Naive thymus-derived CD4-positive, alpha-beta T cell (primary cell): ENCODE measurements at regions of chr10 and their contacts with region 1.

Region 1: DNA sequence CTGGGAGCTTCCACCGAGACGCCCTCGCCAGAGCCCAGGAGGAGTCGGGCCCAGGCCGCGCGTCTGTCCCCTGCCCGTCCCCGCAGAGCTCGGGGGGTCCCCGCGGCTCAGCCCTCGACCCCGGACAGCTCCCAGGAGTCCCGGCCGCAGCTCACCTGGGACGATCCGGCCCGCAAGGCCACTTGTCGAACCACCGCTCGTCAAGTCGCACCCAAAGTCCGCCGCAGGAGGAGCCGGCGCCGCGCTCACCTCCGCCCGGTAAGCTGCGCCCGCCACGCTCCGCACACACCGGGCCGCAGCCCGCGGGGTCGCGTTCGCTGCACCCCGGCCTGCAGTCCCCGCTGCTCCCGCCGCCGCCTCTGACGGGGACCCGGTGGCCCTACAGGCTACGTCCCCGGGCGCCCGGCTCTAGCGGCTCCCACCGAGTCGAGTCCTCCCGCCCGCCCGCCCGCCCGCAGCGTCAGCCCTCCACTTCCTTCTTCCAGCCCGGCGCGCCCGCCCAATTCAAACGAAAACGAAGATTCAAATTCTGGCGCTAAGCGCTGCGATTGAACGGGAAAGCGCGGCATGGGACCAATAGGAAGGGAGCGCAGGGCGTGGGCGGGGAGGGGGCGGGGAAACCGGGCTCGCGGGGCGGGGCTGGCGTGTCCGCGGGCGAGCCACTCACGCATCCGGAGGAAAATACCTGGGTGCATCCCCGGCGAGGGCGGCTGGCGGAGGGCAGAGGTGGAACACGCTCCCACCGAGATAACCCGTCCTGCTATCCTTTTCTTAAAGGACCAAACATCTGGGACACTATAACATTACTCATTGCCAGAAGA is at the start of gene MKI67:
- DNase-seq: peak; percentile 68 to 88 (median 85)
- ATAC-seq: peak; percentile 98
- H3K4me3 ChIP-seq: peak within 1 kb of the TSS; percentile 82
- H3K4me3 Mint-ChIP-seq: peak within 1 kb of the TSS; percentile 86 to 94 (median 88)
- H3K27ac ChIP-seq: peak within 1 kb of the TSS; percentile 73
- H3K27ac Mint-ChIP-seq: peak within 1 kb of the TSS in 8 of 9 donors; percentile 56 to 97 (median 71)
- H3K4me1 ChIP-seq: peaks cover 9 to 18% of the 10 kb centered on the region in 2 donors
- H3K4me1 Mint-ChIP-seq: peaks cover 6 to 44% (median 19%) of the 10 kb centered on the region in 7 donors
- H3K27me3 ChIP-seq: peaks cover 10 to 11% of the 10 kb centered on the region in 2 donors
- H3K27me3 Mint-ChIP-seq: peaks cover 7 to 37% (median 33%) of the 10 kb centered on the region in 5 donors
- total RNA-seq, gene MKI67: 0.05 to 219 (median 1.6) TPM

Region 2: DNA sequence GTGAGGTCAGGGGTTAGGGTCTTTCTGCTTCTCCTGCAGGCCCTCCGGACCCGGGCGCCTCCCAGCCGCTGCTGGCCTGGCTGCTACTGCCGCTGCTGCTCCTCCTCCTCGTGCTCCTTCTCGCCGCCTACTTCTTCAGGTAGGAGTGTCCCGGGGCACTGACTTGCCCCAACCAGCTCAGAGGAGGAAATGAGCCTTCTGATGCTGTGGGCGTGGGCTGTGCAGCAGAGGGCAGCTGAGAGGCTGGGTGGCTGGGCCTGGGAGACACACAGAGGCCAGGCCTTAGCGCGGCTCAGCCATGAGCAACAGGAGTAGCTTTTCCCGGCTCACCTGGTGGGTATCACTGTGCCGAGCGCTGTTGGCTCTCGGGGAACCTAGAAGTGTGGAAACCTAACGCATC is 78.8 kb before region 1 on chr10:
- CTCF ChIA-PET with region 1: no interaction called
- POLR2A ChIA-PET with region 1: no interaction called
- intact Hi-C with region 1: loop called (anchors 1 kb)
- DNase-seq: peak; percentile 57 to 84 (median 80)
- ATAC-seq: peak; percentile 96
- H3K4me3 ChIP-seq: peak overlapping the region; percentile 60
- H3K4me3 Mint-ChIP-seq: peak overlapping the region; percentile 88 to 98 (median 96)
- H3K27ac ChIP-seq: peak overlapping the region; percentile 82
- H3K27ac Mint-ChIP-seq: peak overlapping the region; percentile 77 to 98 (median 95)
- H3K4me1 ChIP-seq: peaks cover 28 to 37% of the 10 kb centered on the region in 2 donors
- H3K4me1 Mint-ChIP-seq: peaks cover 13 to 72% (median 52%) of the 10 kb centered on the region in 7 donors
- H3K27me3 ChIP-seq: no peaks in the 10 kb centered on the region
- H3K27me3 Mint-ChIP-seq: no peaks in the 10 kb centered on the region

Region 3: GRCh38 chr10:128087884-128088709 is 38.1 kb before region 1 on chr10:
- CTCF ChIA-PET with region 1: interaction called, 3 read pairs
- POLR2A ChIA-PET with region 1: no interaction called
- intact Hi-C with region 1: loop called in 1 of 2 experiments (anchors 5 kb)
- DNase-seq: no peak
- ATAC-seq: no peak
- H3K4me3 ChIP-seq: no peak overlapping the region
- H3K4me3 Mint-ChIP-seq: no peak overlapping the region
- H3K27ac ChIP-seq: no peak overlapping the region
- H3K27ac Mint-ChIP-seq: no peak overlapping the region
- H3K4me1 ChIP-seq: no peaks in the 10 kb centered on the region
- H3K4me1 Mint-ChIP-seq: peaks cover 0 to 10% (median 0%) of the 10 kb centered on the region in 7 donors
- H3K27me3 ChIP-seq: no peaks in the 10 kb centered on the region
- H3K27me3 Mint-ChIP-seq: no peaks in the 10 kb centered on the region

Region 4: DNA sequence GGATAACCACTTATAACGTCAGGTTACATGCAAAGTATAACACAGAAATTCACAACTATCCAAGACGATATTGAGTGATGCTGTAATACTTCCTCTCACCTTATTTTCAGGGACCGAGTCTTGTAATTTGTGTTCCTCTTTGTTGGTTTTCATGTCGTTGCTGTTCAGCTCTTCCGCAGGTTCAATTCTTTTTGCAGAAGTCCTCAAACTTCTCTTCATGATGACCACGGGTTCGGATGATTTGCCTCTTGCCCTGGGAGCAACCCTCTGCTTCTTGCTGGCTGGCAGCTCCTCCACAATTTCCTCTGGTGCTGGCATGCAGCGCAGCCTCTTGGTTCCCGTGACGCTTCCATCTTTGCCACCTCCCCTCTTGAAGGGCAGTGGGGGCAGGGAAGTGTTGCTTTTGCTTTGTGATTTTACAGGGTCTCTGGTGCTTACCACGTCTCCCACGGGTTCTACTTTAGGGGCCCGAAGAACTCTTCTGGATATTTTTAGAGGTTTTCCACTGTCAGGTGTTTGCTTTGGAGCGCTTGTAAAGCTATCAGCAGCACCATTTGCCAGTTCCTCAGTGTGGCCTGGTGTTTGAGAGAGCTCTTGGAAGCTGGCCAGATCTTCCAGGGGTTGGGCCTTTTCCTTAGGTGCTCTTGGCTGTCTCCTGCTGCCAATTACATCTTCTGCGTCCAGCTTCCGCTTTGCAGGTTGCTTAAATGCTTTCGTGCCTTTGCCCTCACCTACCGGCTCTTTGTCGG is 23.5 kb before region 1 on chr10:
- CTCF ChIA-PET with region 1: no interaction called
- POLR2A ChIA-PET with region 1: no interaction called
- intact Hi-C with region 1: loop called (anchors 1 to 2 kb)
- DNase-seq: no peak
- ATAC-seq: no peak
- H3K4me3 ChIP-seq: peak overlapping the region; percentile 16
- H3K4me3 Mint-ChIP-seq: peak overlapping the region in 8 of 10 donors; percentile 16 to 68 (median 40)
- H3K27ac ChIP-seq: no peak overlapping the region
- H3K27ac Mint-ChIP-seq: peak overlapping the region in 8 of 9 donors; percentile 13 to 84 (median 69)
- H3K4me1 ChIP-seq: peaks cover 29 to 32% of the 10 kb centered on the region in 2 donors
- H3K4me1 Mint-ChIP-seq: peaks cover 7 to 41% (median 20%) of the 10 kb centered on the region in 7 donors
- H3K27me3 ChIP-seq: no peaks in the 10 kb centered on the region
- H3K27me3 Mint-ChIP-seq: no peaks in the 10 kb centered on the region

Region 5: DNA sequence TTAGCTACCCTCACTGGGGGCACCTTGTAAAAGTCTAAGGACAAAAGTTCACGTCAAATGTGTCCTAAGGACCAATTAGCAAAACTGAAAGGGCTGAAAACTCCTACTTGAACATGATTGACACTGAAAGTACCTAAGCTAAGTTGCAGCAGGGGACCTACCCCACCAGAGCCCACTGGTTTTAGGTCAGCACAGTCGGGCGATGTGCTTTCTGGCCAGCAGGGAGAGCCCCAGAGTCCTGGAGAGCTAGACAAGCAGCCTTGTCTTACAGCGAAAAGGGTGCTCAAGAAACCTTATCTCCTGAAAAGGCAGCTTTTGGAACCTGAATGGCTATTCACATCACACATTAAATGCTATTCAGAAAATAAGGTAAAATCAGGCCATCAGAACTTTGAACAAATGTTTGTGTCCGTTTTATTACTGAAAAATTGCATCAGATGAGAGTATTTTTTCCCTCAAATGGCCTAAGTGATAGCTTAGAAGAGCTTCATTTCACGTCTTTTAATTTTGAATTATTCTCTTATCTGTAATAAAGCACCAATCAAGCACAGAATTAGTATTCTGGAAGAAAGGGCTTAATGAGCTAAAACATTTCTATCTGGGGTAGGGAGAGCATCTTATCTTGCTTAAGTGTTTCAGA is 52.3 kb after region 1 on chr10:
- CTCF ChIA-PET with region 1: no interaction called
- POLR2A ChIA-PET with region 1: no interaction called
- intact Hi-C with region 1: loop called in 1 of 2 experiments (anchors 2 kb)
- DNase-seq: peak in 7 of 9 donors; percentile 16 to 56 (median 34)
- ATAC-seq: peak; percentile 80
- H3K4me3 ChIP-seq: no peak overlapping the region
- H3K4me3 Mint-ChIP-seq: no peak overlapping the region
- H3K27ac ChIP-seq: no peak overlapping the region
- H3K27ac Mint-ChIP-seq: peak overlapping the region in 2 of 9 donors; percentile 72 to 83
- H3K4me1 ChIP-seq: peaks cover 0 to 14% of the 10 kb centered on the region in 2 donors
- H3K4me1 Mint-ChIP-seq: peaks cover 14 to 40% (median 25%) of the 10 kb centered on the region in 7 donors
- H3K27me3 ChIP-seq: no peaks in the 10 kb centered on the region
- H3K27me3 Mint-ChIP-seq: peaks cover 0 to 12% (median 0%) of the 10 kb centered on the region in 5 donors